ENCODE measurements at regions of chr1 and their contacts with region 1.

Region 1: GRCh38 chr1:248837794-248838356 is at the start of gene ZNF672:
- DNase-seq: peak; percentile 93 to 99 (median 96)
- ATAC-seq: peak; percentile 88
- H3K4me3 ChIP-seq: peak within 1 kb of the TSS; percentile 81
- H3K27ac ChIP-seq: peak within 1 kb of the TSS; percentile 92
- H3K4me1 ChIP-seq: peaks cover 40 to 47% of the 10 kb centered on the region in 2 experiments
- H3K27me3 ChIP-seq: no peaks in the 10 kb centered on the region
- CTCF ChIP-seq: no peak
- EP300 ChIP-seq: peak; percentile 7; the same call in 1 of the 2 replicates
- POLR2A ChIP-seq: peak; percentile 57; the same call in 1 of the 2 replicates
- RAD21 ChIP-seq: no peak
- polyA plus RNA-seq, gene ZNF672: 1.9 to 3.1 TPM

Region 2: DNA sequence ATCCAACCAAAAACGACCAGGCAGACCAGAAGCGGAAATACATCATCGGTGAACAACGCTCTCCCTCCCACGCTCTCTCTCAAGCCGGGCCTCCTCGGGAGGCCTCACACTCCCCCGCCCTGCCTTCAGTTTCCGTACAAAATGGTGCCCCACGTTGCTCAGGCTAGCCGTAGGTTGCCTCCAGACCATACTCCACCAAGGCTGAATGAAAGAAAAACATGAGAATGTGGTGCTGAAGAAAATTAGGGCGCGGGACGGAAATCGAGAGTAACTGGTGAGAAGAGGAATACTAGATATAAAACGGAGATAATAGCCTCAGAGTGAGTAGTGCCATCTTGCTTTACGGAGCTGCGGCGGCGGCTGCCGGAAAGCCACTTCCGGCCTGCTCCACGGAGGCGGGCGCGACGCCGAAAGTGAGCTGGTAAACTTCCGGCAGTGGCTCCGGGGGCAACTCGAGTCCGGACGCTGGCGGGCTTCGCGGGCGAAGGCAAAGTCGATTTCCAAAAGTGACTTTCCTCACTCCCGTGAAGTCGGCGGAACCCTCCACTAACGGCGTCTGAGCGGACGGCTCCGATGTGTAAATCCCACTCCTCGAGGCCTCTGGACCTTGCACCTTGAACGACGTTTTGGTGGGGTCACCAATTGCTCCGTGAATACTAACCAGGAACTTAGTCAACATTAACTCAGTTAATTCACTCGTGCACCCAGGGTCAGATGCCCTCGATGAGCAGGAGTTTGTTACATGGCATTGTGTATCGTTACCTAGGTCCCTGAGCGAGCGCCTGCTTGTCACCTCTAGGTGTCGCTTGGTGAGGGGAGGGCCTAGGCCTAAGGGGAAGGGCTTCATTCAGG is 11.7 kb before region 1 on chr1 and contains the start of gene SH3BP5L:
- CTCF ChIA-PET with region 1: no interaction called
- POLR2A ChIA-PET with region 1: interaction called, 78 read pairs
- in situ Hi-C with region 1: no loop called
- intact Hi-C with region 1: loop called (anchors 1 kb)
- DNase-seq: peak; percentile 88 to 98 (median 92)
- ATAC-seq: peak; percentile 90
- H3K4me3 ChIP-seq: peak within 1 kb of the TSS; percentile 90
- H3K27ac ChIP-seq: peak within 1 kb of the TSS; percentile 99
- H3K4me1 ChIP-seq: peaks cover 29 to 50% of the 10 kb centered on the region in 2 experiments
- H3K27me3 ChIP-seq: no peaks in the 10 kb centered on the region
- CTCF ChIP-seq: peak; percentile 75 to 92 (median 79)
- EP300 ChIP-seq: peak; percentile 9
- POLR2A ChIP-seq: peak; percentile 93
- RAD21 ChIP-seq: peak; percentile 66 to 68
- polyA plus RNA-seq, gene SH3BP5L: 1.9 to 2.7 TPM

Region 3: DNA sequence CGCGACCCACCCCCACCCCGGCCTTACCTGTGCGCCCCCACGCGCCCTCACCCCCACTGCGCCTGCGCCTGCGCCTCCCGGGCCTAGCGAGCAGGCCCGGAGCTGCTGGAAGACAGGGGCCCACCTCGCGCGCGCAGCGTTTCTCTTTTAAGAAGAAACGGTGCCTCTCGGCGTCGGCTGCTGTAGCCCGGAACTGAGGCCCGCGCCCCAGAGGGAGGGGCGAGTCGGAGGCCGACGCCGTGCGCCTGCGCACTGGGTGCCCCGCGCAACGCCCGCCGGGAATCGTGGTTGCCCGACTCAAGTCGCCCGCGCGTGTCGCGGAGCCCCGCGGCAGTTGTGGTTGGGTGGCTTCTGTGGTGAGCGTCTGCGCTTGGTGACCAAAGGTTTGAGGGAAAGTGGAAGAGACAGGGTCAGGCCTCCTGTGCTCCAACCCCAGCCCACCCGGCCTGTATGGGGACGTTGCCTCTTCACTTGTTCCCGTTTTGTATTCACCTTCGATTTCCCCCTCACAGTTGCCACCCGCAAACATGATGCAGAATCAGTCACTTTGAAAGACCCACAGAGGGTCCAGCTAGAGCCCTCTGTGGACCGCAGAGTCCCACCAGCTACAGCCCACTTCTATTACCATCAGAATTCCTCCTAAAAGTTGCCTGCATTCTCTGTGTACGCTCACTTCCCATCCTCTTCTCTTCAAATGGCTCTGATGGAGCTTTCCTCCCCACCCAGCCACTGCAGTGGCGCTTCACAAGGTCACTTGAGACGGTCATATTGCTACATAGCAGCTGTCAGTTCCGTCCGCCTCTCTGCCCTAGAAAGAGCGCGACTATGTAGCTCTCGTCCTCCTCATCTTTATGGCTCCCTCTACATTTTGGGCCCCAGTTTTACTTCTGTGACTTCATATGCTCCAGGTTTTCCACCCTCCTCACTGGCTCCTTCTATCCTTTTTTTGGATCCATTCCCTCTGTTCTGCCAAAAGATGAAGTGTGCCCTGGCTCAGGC is 21.3 kb after region 1 on chr1 and contains the start of gene ZNF692:
- CTCF ChIA-PET with region 1: interaction called, 3 read pairs
- POLR2A ChIA-PET with region 1: interaction called, 29 read pairs
- in situ Hi-C with region 1: no loop called
- intact Hi-C with region 1: loop called (anchors 1 kb)
- DNase-seq: peak; percentile 94 to 99 (median 96)
- ATAC-seq: peak; percentile 86
- H3K4me3 ChIP-seq: peak within 1 kb of the TSS; percentile 66
- H3K27ac ChIP-seq: peak within 1 kb of the TSS; percentile 99
- H3K4me1 ChIP-seq: peaks cover 47 to 50% of the 10 kb centered on the region in 2 experiments
- H3K27me3 ChIP-seq: no peaks in the 10 kb centered on the region
- CTCF ChIP-seq: no peak
- EP300 ChIP-seq: peak; percentile 4; the same call in 1 of the 2 replicates
- POLR2A ChIP-seq: peak; percentile 97
- RAD21 ChIP-seq: no peak
- polyA plus RNA-seq, gene ZNF692: 8.4 to 10.5 TPM

Region 4: DNA sequence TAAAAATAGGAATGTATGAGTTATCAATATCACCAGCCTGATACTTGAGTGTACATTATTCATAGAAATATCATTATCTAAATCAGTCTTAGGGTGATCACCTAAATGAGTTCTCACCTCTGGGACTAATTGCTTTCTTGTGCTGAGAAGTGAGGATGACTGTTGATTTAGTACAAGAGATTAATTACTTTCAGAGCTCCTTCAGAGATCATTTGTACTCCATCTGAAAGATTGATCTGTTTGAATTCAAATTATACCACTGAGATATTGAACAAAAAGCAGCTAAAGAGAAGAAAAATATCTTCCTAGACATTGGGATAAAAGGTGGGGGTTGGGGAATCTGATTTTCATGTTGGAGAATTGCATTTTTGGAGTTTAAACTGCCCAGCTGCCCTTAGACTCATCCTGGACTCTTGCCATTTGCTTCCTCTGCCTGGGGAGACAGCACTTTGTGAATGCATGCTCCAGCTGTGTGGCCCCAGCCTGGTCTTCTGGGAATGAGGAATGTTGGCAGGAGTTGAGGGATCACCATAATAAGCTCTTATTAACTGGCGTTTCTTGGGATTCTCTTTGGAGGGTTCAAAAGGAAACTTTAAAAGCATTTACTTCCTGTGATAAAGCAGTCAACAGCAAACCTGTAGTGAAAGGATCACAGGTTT is 48.5 kb after region 1 on chr1:
- CTCF ChIA-PET with region 1: no interaction called
- POLR2A ChIA-PET with region 1: interaction called, 9 read pairs
- in situ Hi-C with region 1: no loop called
- intact Hi-C with region 1: loop called (anchors 1 kb)
- DNase-seq: peak in 1 of 4 experiments; percentile 51
- ATAC-seq: no peak
- H3K4me3 ChIP-seq: no peak overlapping the region
- H3K27ac ChIP-seq: peak overlapping the region; percentile 51
- H3K4me1 ChIP-seq: peaks cover 23 to 56% of the 10 kb centered on the region in 2 experiments
- H3K27me3 ChIP-seq: no peaks in the 10 kb centered on the region
- CTCF ChIP-seq: no peak
- EP300 ChIP-seq: no peak
- POLR2A ChIP-seq: no peak
- RAD21 ChIP-seq: no peak